ENCODE measurements at regions of chr9 and their contacts with region 1.

Region 1: DNA sequence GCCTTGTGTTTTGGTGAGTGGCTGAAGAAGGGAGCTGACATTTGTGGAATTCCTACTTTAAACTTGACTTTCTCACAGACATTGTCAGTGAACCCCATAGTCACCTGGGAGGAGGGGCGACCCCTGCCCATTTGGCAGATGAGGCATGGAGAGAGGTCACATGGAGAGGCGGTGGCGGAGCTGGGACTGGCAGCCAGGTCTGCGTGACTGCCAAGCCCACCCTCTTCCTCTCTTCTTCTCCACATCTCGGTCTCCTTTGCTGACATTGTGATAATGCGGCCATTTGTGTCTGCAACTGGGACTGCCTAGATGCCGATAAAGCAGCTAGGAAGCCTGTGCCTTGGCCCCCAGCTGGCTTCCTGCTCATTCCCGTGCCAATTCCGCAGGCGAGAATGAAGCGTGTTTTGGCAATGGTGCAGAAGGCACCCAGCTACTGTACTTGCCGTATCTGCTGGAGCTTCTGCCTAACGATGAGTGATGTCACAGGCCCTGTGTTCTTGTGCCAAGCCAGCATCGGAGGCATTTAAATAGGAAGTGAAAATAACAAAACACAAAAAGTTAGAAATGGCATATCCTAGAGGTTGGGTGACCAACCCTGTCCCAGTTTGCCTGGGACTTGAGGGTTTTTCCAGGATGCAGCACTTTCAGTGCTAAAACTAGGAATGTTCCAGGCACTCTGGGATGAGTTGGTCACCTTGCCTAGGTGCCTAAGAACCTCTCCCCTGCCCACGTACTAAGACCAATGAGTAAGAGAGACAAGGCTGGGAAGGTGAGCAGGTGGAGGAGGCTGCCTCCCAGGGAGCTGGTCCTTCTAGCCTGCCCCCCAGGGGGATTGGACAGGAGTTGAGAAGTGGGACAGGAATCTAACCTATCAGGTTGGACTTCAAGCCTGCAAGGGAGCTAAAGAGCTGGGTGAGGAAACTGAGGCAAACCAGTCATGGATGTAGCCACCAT is 23.6 kb downstream of the OLFML2A start:
- DNase-seq: no peak
- H3K4me3 ChIP-seq: no peak overlapping the region
- H3K27ac ChIP-seq: no peak overlapping the region
- H3K4me1 ChIP-seq: peaks cover 4 to 15% of the 10 kb centered on the region in 2 experiments; a peak in 3 of 4 replicates
- H3K27me3 ChIP-seq: no peaks in the 10 kb centered on the region
- CTCF ChIP-seq: no peak
- EP300 ChIP-seq: no peak
- RAD21 ChIP-seq: no peak

Region 2: DNA sequence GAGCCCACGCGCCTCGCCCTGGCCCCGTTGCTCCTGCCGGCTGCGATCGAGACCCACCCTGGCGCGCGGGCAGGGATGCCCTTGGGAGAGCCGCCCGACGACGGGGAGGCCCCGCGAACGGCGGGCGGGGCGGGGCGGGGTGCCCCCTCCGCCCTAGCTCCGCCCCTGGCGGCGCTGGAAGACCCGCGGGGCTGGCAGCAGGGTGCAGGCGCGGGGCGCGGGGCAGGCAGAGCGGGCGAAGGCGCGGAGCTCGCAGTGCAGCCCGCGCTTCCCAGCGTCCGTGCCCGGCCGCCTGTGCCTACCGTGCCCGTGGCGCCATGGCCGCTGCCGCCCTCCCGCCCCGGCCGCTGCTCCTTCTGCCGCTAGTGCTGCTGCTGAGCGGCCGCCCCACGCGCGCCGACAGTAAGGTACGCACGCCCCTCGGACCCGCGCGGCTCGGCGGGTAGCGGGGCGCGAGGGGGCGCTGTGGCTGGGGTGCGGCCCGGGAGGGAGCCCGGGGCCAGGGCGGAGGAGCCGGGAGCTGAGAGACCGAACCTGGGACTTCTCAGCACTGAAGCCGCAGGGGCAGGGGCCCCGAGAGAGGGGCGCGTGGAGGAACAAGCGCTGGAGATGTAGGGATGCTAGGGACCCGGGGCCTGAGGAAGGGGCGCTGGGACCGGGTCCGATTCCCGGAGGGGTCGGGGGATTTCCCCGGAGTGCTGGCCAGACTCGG is 23.5 kb before region 1 on chr9 and contains the start of gene OLFML2A:
- CTCF ChIA-PET with region 1: interaction called, 81 read pairs
- POLR2A ChIA-PET with region 1: no interaction called
- DNase-seq: peak; percentile 86
- H3K4me3 ChIP-seq: peak within 1 kb of the TSS; percentile 52 to 59
- H3K27ac ChIP-seq: no peak within 1 kb of the TSS
- H3K4me1 ChIP-seq: peaks cover 3 to 14% of the 10 kb centered on the region in 2 experiments; a peak in 3 of 4 replicates
- H3K27me3 ChIP-seq: no peaks in the 10 kb centered on the region
- CTCF ChIP-seq: peak; percentile 52
- EP300 ChIP-seq: no peak
- RAD21 ChIP-seq: no peak
- polyA plus RNA-seq, gene OLFML2A: 4.8 and 7.7 TPM in 2 replicates

Region 3: GRCh38 chr9:124810513-124811355 is 10.2 kb after region 1 on chr9:
- CTCF ChIA-PET with region 1: no interaction called
- POLR2A ChIA-PET with region 1: no interaction called
- DNase-seq: peak; percentile 27
- H3K4me3 ChIP-seq: no peak overlapping the region
- H3K27ac ChIP-seq: peak overlapping the region; percentile 53 to 72; a peak in 3 of 4 replicates
- H3K4me1 ChIP-seq: peaks cover 0 to 25% of the 10 kb centered on the region in 2 experiments; a peak in 3 of 4 replicates
- H3K27me3 ChIP-seq: no peaks in the 10 kb centered on the region
- CTCF ChIP-seq: no peak
- EP300 ChIP-seq: no peak
- RAD21 ChIP-seq: no peak